Right ventricle myocardium inferior (tissue), 1 donor: ENCODE measurements at regions of chr22 and their contacts with region 1.

Region 1: GRCh38 chr22:42820066-42820763 is 36.9 kb downstream of the ARFGAP3 start:
- DNase-seq: no peak
- ATAC-seq: no peak

Region 2: DNA sequence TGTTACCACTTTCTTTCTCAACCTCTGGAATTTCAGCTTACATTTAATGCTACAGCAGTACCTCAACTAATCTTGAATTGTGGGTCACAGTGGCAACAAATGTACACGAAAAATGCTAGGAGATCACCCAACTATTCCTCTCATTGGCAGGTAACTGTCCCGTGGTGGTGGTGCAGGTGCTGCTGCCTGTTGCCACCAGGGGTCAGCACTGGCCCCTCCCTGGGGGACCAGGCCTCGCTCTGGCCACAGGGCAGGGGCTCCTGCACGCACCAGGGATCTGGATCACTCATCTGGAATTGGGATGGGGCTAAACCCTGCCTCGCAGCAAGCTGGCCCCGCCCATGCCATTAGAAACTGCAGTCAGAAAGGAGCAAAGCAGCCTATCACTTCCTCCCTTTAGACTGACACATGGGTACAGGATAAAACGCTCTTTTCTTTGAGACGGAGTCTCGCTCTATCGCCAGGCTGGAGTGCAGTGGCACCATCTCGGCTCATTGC is 198.7 kb before region 1 on chr22:
- intact Hi-C with region 1: loop called (anchors 5 kb)
- DNase-seq: peak; percentile 83
- ATAC-seq: peak; percentile 68

Region 3: DNA sequence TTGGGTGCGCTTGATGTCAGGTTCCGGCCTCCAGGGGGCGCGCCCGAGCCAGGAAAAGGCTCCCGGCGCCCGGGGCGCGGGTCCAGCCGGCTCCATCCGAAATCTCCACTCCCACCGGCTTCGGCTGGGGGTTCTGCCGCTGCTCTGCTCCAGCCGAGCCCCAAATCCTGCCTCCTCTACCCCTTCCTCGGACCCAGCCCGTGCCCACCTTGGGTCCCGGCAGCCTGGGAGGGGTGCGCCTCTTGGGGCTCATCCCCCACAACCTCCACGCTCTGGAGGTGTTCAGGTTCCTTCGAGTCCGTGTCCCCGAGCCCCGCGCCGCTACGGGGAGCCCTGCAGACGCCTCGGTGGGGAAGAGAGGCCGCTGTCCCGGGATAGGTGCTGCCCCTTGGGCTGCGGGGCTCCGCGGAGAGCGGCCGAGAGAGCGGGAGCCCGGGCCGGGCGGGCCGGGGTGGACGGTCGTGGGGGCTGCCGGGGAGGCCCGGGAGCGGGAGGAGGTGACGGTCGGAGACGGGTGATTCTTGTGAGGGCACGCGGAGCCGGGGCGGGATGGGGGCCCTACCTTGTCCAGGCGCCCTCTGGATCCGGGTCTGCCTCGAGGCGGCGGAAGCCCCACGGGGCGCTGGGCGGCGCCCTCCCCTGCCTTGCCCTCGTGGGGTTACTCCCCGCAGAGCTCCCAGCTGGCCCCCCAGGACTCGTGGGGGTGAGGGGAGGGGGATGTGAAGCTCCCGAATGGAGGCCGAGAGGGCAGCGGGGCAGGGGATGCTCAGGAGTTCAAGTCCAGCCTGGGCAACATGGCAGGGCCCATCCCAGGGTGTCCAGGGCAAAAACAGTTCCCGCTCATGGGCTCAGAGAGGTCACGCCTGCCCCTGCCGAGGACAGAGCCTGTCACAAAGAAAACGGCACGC is 157.8 kb before region 1 on chr22:
- intact Hi-C with region 1: loop called (anchors 5 kb)
- DNase-seq: peak; percentile 92
- ATAC-seq: peak; percentile 89

Region 4: GRCh38 chr22:42780070-42780540 is 40.1 kb before region 1 on chr22:
- intact Hi-C with region 1: loop called (anchors 5 kb)
- DNase-seq: peak; percentile 4
- ATAC-seq: peak; percentile 85

Region 5: DNA sequence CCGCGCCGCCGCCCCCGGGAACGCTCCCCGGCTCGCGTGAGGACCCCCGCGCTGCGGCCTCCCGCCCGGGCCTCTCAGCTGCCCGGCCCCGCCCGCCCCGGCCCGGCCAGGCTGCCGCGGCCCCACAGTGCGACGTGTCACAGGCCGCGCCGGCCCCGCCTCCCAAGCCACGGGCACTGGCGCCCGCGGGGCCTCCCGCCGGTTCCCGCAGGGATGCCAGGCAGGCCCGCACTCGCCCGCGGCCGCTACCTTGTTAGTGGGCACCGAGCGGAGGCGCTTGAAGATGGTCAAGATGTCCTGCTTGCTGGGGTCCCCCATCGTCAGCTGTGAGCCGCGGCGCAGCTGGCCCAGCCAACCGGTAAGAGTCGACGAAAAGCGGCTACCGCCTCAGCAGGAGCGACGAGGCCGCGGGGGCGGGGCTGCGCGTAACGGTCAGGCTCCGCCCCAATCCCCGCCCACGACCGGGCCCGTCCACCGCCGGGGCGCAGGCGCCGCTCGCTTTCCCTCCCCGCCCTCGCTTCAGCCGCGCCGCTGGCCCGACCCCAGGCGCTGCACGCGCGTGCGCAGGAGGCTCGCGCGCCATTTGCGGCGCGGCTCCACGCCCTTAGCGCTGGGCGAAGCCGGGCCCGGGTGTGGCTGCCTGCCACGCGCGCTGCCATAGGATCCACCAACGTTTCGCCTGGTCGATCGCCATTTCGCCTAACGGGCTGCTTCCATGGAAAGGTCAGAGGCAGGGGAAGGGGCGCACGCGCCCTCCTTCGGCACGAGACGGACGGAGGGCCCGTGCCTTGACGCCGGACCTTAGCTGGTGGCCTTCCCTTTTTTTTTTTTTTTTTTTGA is 36.9 kb after region 1 on chr22 and contains the start of gene ARFGAP3:
- intact Hi-C with region 1: no loop called
- DNase-seq: peak; percentile 97
- ATAC-seq: peak; percentile 98
- total RNA-seq, gene ARFGAP3: 22.3 TPM

Region 6: DNA sequence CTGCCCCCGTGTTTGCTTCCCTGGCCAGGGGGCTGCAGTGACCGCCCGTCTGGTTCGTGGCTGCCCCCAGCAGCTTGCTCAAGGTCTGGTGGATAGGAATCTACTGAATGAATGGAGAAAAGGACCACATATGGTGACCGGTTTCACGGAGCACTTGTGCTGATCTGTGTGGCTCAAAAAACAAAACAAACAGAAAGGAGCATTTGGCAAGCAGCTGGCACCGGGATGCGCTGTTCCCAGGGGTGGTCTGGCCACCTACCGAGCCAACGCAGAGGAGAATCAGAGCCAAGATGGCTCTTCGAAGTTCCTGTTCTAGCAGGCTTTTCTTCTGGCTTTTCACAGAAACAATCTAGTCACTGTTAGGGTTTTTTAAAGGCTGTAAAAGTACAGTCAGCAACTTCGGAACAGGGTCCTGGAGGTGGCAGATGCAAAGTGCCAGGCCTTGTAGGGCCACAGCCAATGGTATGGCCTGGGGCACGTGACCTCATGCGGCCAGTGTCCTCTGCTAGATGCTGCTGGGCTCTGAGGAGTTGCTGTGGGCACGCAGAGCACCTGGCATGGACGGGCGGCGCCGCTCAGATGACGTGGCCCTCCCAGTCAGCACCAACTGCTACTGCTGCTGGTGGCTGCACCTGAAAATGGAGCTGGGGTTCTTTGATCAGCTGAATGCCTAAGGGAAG is 222.0 kb after region 1 on chr22:
- intact Hi-C with region 1: no loop called
- DNase-seq: no peak
- ATAC-seq: no peak